Naive thymus-derived CD4-positive, alpha-beta T cell (primary cell): ENCODE measurements at regions of chr1 and their contacts with region 1.

Region 1: GRCh38 chr1:154272217-154272998 is at the start of gene HAX1:
- DNase-seq: peak; percentile 74 to 99 (median 97)
- ATAC-seq: peak; percentile 95
- H3K4me3 ChIP-seq: peak within 1 kb of the TSS; percentile 98
- H3K4me3 Mint-ChIP-seq: peak within 1 kb of the TSS; percentile 94 to 99 (median 97)
- H3K27ac ChIP-seq: peak within 1 kb of the TSS; percentile 92
- H3K27ac Mint-ChIP-seq: peak within 1 kb of the TSS; percentile 97 to 99 (median 99)
- H3K4me1 ChIP-seq: peaks cover 10 to 20% of the 10 kb centered on the region in 2 donors
- H3K4me1 Mint-ChIP-seq: peaks cover 20 to 47% (median 42%) of the 10 kb centered on the region in 7 donors
- H3K27me3 ChIP-seq: no peaks in the 10 kb centered on the region
- H3K27me3 Mint-ChIP-seq: no peaks in the 10 kb centered on the region
- total RNA-seq, gene HAX1: 71.9 to 111 (median 104) TPM

Region 2: DNA sequence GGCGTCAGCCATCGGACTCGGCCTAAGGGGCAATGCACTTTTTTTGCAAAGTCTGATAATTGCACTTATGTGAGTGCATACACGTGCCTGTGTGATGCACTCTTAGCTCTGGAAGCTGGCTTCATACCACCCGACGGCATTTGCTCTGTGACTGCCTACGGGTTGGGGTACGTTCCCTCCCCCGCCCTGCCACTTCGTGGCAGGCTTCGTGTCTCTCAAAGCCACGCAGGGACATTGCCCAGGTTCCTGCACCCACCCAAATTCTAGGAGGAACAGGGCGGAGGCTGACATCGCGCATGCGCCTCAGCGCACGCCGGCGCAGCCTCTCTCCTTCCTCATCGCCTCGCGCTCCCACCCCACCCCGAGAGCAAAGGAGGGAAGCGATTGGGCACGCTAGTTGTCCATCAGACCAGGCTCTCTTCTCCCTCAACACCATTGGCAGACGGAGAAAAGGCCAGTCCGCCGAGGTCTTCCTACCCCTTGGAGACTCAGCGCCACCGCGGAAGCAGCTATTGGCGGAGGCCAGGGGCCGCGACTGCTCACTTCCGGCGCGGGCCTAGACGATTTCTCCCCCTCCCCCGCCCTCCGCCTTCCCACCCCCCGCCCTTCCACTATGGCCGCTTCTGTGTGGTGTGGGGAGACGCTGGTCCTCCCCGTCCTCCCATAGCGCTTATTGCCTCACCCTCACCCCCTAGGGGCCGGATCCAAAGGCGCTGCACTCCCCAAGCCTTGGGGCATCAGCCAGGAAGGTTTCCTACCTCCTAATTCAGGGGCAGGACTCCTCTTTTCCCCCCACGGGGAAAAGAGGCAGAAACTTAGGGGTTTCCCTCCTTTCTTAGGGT is 544.7 kb before region 1 on chr1 and contains the start of gene INTS3:
- CTCF ChIA-PET with region 1: no interaction called
- POLR2A ChIA-PET with region 1: interaction called, 6 read pairs
- intact Hi-C with region 1: loop called in 1 of 2 experiments (anchors 5 kb)
- DNase-seq: peak; percentile 84 to 100 (median 99)
- ATAC-seq: peak; percentile 99
- H3K4me3 ChIP-seq: peak within 1 kb of the TSS; percentile 92
- H3K4me3 Mint-ChIP-seq: peak within 1 kb of the TSS; percentile 82 to 97 (median 92)
- H3K27ac ChIP-seq: peak within 1 kb of the TSS; percentile 94
- H3K27ac Mint-ChIP-seq: peak within 1 kb of the TSS; percentile 89 to 98 (median 95)
- H3K4me1 ChIP-seq: peaks cover 11 to 15% of the 10 kb centered on the region in 2 donors
- H3K4me1 Mint-ChIP-seq: peaks cover 7 to 35% (median 32%) of the 10 kb centered on the region in 7 donors
- H3K27me3 ChIP-seq: no peaks in the 10 kb centered on the region
- H3K27me3 Mint-ChIP-seq: peaks cover 0 to 2% (median 0%) of the 10 kb centered on the region in 5 donors
- total RNA-seq, gene INTS3: 43.6 to 68.1 (median 56.8) TPM

Region 3: DNA sequence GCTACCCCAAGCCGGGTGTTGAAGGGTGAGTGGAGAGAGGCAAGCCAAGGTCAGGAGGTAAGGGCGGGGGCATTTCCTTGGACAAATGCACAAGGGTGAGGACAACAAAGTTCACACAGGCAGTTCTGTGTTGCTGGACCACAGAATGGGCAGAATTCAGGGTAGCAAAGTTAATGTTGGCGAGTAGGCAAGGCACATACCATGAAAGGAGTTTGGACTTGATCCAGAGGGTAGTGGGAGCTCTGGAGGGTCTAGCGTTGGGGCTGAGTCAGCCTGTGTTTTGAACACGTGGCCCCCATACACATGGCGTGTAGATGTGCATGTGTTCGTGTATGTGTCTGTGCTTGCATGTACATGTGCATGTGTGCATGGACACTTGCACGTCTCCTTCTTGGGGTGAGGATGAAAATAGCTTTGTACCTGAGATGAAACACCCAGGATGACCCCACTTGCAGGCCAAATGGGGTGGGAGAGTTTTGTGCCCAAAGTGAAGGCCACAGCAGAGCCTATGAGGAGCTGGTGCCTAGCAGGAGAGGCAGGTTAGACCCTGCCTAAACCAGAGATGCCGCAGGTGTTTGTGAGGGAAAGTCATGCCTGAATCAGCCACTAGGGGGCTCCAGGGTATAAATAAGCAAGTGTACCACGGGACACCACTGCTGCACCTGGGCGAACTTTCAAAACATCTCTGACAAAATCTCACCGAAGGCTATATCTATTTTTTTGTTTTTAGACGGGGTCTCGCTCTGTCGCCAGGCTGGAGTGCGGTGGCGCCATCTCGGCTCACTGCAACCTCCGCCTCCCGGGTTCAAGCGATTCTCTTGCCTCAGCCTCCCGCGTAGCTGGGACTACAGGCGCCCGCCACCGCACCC is 475.4 kb before region 1 on chr1:
- CTCF ChIA-PET with region 1: no interaction called
- POLR2A ChIA-PET with region 1: no interaction called
- intact Hi-C with region 1: loop called in 1 of 2 experiments (anchors 1 kb)
- DNase-seq: peak; percentile 57 to 84 (median 78)
- ATAC-seq: peak; percentile 92
- H3K4me3 ChIP-seq: no peak overlapping the region
- H3K4me3 Mint-ChIP-seq: no peak overlapping the region
- H3K27ac ChIP-seq: no peak overlapping the region
- H3K27ac Mint-ChIP-seq: peak overlapping the region in 7 of 9 donors; percentile 39 to 84 (median 65)
- H3K4me1 ChIP-seq: peaks cover 0 to 6% of the 10 kb centered on the region in 2 donors
- H3K4me1 Mint-ChIP-seq: peaks cover 4 to 17% (median 8%) of the 10 kb centered on the region in 7 donors
- H3K27me3 ChIP-seq: no peaks in the 10 kb centered on the region
- H3K27me3 Mint-ChIP-seq: no peaks in the 10 kb centered on the region

Region 4: DNA sequence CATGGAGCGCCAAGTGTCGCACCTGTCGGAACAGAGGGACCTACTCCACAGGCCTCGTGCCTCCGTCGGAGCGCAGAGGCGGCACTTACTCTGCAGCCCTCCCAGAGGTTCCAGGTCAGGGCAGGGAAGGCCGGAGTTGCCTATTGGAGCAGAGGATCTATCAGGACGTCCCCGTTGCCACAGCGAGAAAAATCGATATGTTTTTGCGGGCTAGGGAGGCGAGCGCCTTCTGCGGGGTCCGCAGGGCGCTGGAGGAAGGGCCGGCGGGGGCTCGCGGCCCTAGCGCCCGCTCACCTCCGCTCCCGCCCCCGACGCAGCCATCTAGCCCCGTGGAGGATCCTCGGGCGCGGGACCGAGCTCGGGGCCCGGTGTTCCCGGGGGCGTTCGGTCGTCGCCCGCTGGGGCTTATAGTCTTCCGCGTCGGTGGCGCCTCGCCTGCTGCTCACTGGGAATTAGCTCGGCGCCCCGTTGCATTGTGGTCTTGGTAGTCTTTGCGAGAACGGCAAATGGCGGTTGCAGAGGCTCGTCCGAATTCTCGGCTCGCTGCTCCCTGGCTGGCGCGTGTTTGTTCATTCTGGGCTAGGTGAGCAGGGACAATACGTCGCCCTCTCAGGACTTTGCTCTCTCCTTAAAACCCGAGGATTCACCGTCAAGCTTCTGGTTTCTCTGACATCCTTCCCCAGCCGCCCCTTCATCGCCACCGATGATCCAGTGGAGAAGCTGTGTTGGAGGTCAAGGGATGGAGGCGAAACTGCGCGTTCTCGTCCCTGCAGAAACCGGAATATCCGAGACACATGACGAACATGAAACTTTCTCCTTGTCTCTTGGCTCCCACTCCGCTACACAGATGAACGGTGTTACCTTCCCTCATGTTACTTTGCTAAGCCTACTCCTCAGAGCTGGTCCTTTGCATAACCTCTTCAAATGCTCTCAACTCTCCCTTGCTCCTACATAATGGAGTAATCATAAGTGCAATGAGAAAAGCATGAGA is 294.9 kb before region 1 on chr1 and contains the start of gene JTB:
- CTCF ChIA-PET with region 1: no interaction called
- POLR2A ChIA-PET with region 1: no interaction called
- intact Hi-C with region 1: loop called in 1 of 2 experiments (anchors 5 kb)
- DNase-seq: peak; percentile 65 to 89 (median 78)
- ATAC-seq: peak; percentile 98
- H3K4me3 ChIP-seq: peak within 1 kb of the TSS; percentile 94
- H3K4me3 Mint-ChIP-seq: peak within 1 kb of the TSS; percentile 92 to 99 (median 97)
- H3K27ac ChIP-seq: peak within 1 kb of the TSS; percentile 96
- H3K27ac Mint-ChIP-seq: peak within 1 kb of the TSS; percentile 84 to 98 (median 94)
- H3K4me1 ChIP-seq: peaks cover 9 to 15% of the 10 kb centered on the region in 2 donors
- H3K4me1 Mint-ChIP-seq: peaks cover 23 to 51% (median 40%) of the 10 kb centered on the region in 7 donors
- H3K27me3 ChIP-seq: no peaks in the 10 kb centered on the region
- H3K27me3 Mint-ChIP-seq: no peaks in the 10 kb centered on the region
- total RNA-seq, gene JTB: 78.4 to 134 (median 104) TPM

Region 5: GRCh38 chr1:154198756-154199562 is 73.4 kb before region 1 on chr1:
- CTCF ChIA-PET with region 1: interaction called, 34 read pairs
- POLR2A ChIA-PET with region 1: interaction called, 12 read pairs
- intact Hi-C with region 1: loop called (anchors 1 kb)
- DNase-seq: peak in 7 of 9 donors; percentile 44 to 66 (median 61)
- ATAC-seq: peak; percentile 91
- H3K4me3 ChIP-seq: no peak overlapping the region
- H3K4me3 Mint-ChIP-seq: no peak overlapping the region
- H3K27ac ChIP-seq: no peak overlapping the region
- H3K27ac Mint-ChIP-seq: peak overlapping the region in 1 of 9 donors; percentile 69
- H3K4me1 ChIP-seq: no peaks in the 10 kb centered on the region
- H3K4me1 Mint-ChIP-seq: peaks cover 0 to 4% (median 0%) of the 10 kb centered on the region in 7 donors
- H3K27me3 ChIP-seq: no peaks in the 10 kb centered on the region
- H3K27me3 Mint-ChIP-seq: peaks cover 0 to 7% (median 0%) of the 10 kb centered on the region in 5 donors

Region 6: DNA sequence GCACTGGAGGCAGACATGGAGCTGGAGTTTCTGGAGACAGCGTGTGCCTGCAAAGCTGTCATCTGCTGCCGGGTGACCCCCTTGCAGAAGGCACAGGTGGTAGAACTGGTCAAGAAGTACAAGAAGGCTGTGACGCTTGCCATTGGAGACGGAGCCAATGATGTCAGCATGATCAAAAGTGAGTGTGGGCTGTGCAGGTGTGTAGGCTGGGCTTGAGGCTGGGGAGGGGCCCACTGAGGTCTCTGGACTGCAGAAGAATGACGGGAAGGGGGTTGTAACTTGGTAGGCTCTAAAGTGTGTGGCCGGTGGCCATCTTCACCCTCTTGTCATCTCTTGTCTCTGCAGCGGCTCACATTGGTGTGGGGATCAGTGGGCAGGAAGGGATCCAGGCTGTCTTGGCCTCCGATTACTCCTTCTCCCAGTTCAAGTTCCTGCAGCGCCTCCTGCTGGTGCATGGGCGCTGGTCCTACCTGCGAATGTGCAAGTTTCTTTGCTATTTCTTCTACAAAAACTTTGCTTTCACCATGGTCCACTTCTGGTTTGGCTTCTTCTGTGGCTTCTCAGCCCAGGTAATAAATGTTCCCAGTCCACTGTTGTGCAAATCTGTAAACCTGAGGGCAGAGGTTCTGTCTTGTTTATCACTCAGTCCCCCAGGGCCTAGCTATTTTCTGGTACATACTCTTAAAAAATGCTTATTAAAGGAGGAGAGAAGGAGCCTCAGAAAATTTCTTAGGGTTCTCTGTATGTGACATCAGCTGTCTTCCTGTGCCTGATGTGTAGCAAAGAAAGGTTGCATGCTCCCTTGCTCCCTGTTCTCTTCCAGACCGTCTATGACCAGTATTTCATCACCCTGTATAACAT is 72.8 kb after region 1 on chr1:
- CTCF ChIA-PET with region 1: interaction called, 6 read pairs
- POLR2A ChIA-PET with region 1: interaction called, 5 read pairs
- intact Hi-C with region 1: loop called (anchors 1 to 2 kb)
- DNase-seq: peak; percentile 56 to 79 (median 71)
- ATAC-seq: peak; percentile 55
- H3K4me3 ChIP-seq: peak overlapping the region; percentile 83
- H3K4me3 Mint-ChIP-seq: peak overlapping the region; percentile 79 to 98 (median 92)
- H3K27ac ChIP-seq: peak overlapping the region; percentile 61
- H3K27ac Mint-ChIP-seq: peak overlapping the region; percentile 31 to 100 (median 96)
- H3K4me1 ChIP-seq: peaks cover 60 to 71% of the 10 kb centered on the region in 2 donors
- H3K4me1 Mint-ChIP-seq: peaks cover 64 to 96% (median 73%) of the 10 kb centered on the region in 7 donors
- H3K27me3 ChIP-seq: no peaks in the 10 kb centered on the region
- H3K27me3 Mint-ChIP-seq: no peaks in the 10 kb centered on the region

Region 7: GRCh38 chr1:154533952-154534844 is 261.8 kb after region 1 on chr1:
- CTCF ChIA-PET with region 1: no interaction called
- POLR2A ChIA-PET with region 1: no interaction called
- intact Hi-C with region 1: no loop called
- DNase-seq: no peak
- ATAC-seq: no peak
- H3K4me3 ChIP-seq: no peak overlapping the region
- H3K4me3 Mint-ChIP-seq: no peak overlapping the region
- H3K27ac ChIP-seq: no peak overlapping the region
- H3K27ac Mint-ChIP-seq: no peak overlapping the region
- H3K4me1 ChIP-seq: no peaks in the 10 kb centered on the region
- H3K4me1 Mint-ChIP-seq: no peaks in the 10 kb centered on the region
- H3K27me3 ChIP-seq: no peaks in the 10 kb centered on the region
- H3K27me3 Mint-ChIP-seq: peaks cover 0 to 24% (median 4%) of the 10 kb centered on the region in 5 donors